BJ (cell line): ENCODE measurements at regions of chr12 and their contacts with region 1.

Region 1: DNA sequence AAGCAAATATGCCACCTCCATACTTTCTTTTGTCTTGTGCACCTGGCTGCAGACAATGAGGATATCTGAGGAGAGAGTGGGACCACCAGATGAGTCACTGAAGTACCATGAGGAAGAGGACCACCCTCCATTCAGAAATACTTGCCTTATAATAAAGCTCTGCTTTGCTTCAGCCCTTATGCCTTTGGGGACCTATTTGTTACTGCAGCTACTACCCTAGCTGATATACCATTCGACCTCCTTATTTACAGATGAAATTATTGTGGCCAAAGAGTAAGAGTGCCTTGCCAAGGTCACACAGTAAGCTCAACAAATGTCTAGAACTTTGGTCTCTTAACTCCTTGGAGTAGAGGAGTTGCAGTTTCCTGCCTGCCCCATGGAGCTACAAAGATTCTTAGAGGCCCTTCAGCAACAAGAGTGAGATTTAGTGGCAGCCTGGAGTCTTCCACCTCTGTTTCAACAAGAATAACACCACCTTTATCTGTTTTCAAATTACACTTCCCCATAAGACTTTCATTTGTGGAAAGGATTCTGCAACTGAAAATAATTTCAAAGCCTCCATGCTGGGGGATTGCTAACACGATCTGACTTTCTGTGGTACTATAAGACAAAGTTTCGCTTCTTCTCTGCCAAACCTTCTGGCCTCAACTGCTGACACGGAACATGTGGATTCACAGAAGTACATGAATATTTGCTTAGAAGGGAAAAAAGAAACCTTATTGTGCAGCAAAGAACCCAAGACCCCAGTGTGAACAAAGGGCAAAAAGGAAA is 3.6 kb downstream of the CMKLR1 start:
- DNase-seq: no peak
- H3K4me3 ChIP-seq: no peak overlapping the region
- H3K27me3 ChIP-seq: no peaks in the 10 kb centered on the region
- CTCF ChIP-seq: no peak

Region 2: GRCh38 chr12:108289350-108290161 is 46.0 kb before region 1 on chr12:
- CTCF ChIA-PET with region 1: no interaction called
- POLR2A ChIA-PET with region 1: no interaction called
- DNase-seq: no peak
- H3K4me3 ChIP-seq: no peak overlapping the region
- H3K27me3 ChIP-seq: no peaks in the 10 kb centered on the region
- CTCF ChIP-seq: no peak

Region 3: GRCh38 chr12:108305991-108306501 is 29.5 kb before region 1 on chr12:
- CTCF ChIA-PET with region 1: no interaction called
- POLR2A ChIA-PET with region 1: interaction called, 16 read pairs
- DNase-seq: no peak
- H3K4me3 ChIP-seq: peak overlapping the region; percentile 13; the same call in 1 of the 2 replicates
- H3K27me3 ChIP-seq: peaks cover 8% of the 10 kb centered on the region
- CTCF ChIP-seq: no peak